ENCODE measurements at regions of chr2 and their contacts with region 1.

Region 1: DNA sequence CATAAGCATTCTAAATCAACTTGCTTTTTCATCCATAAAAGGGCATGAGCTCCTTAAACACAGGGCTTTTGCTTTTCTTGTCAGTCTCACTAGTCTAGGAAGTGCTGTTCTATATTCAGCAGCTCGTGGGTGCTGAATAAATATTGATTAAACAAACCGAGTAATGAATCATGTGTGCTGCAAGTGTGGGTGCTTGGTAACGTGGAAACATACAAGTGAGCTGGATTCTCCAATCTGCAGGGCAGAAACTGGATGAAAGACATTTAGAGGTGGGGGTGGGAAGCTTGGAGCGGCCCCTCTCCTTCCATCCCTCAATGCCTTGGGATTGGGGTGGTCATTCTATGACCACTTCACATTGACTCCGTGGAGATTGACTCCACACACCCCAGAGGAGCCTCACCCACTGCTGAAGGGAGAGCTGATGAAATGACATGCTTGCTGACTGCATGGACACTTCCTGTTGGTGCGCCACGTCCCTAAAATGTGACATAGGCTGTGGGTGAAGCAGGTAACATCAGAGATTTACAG is 114.6 kb downstream of the DOCK10 start:
- DNase-seq: peak; percentile 83 to 92 (median 85)
- H3K4me3 ChIP-seq: peak overlapping the region in 1 of 2 donors; percentile 12
- H3K4me3 Mint-ChIP-seq: peak overlapping the region; percentile 65 to 72 (median 70)
- H3K27ac ChIP-seq: peak overlapping the region; percentile 63
- H3K27ac Mint-ChIP-seq: peak overlapping the region; percentile 92 to 99 (median 96)
- H3K4me1 ChIP-seq: peaks cover 100% of the 10 kb centered on the region
- H3K4me1 Mint-ChIP-seq: peaks cover 89 to 100% (median 94%) of the 10 kb centered on the region in 4 donors
- H3K27me3 ChIP-seq: no peaks in the 10 kb centered on the region
- H3K27me3 Mint-ChIP-seq: no peaks in the 10 kb centered on the region

Region 2: GRCh38 chr2:224885836-224886547 is 41.7 kb before region 1 on chr2:
- CTCF ChIA-PET with region 1: interaction called, 3 read pairs
- POLR2A ChIA-PET with region 1: interaction called, 3 read pairs
- intact Hi-C with region 1: loop called (anchors 5 kb)
- DNase-seq: no peak
- H3K4me3 ChIP-seq: no peak overlapping the region
- H3K4me3 Mint-ChIP-seq: peak overlapping the region in 1 of 8 donors; percentile 7
- H3K27ac ChIP-seq: peak overlapping the region; percentile 9
- H3K27ac Mint-ChIP-seq: peak overlapping the region; percentile 57 to 81 (median 67)
- H3K4me1 ChIP-seq: peaks cover 29% of the 10 kb centered on the region
- H3K4me1 Mint-ChIP-seq: peaks cover 45 to 72% (median 53%) of the 10 kb centered on the region in 4 donors
- H3K27me3 ChIP-seq: no peaks in the 10 kb centered on the region
- H3K27me3 Mint-ChIP-seq: no peaks in the 10 kb centered on the region

Region 3: DNA sequence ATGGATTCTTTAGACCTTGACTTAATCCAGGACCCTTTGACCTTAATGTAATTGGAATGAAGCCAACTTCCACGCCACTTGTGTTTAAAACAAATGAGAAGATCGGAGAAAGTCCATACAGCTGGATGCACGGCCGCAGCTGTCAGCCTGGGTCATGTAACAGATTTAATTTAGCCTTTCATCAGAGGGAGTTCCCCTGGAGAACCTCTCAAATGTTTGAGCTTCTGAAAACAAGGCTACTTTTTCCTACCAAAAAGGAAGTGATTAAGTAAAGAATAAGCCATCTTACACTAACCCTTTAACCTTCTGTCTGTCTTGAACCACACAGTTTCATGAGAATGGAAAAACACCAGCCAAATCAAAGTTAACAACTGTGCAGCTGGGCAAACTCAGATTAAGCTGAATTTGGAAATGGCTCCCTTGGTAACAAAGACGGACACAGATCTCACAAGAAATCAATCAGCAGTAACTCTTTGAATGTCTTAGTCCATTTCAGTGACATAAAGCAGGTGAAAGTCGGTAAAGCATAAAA is 11.0 kb after region 1 on chr2:
- CTCF ChIA-PET with region 1: interaction called, 14 read pairs
- POLR2A ChIA-PET with region 1: interaction called, 279 read pairs
- intact Hi-C with region 1: no loop called
- DNase-seq: peak in 1 of 5 donors; percentile 66
- H3K4me3 ChIP-seq: peak overlapping the region in 1 of 2 donors; percentile 3
- H3K4me3 Mint-ChIP-seq: peak overlapping the region; percentile 13 to 79 (median 66)
- H3K27ac ChIP-seq: peak overlapping the region; percentile 44
- H3K27ac Mint-ChIP-seq: peak overlapping the region; percentile 69 to 94 (median 83)
- H3K4me1 ChIP-seq: peaks cover 94% of the 10 kb centered on the region
- H3K4me1 Mint-ChIP-seq: peaks cover 62 to 90% (median 75%) of the 10 kb centered on the region in 4 donors
- H3K27me3 ChIP-seq: no peaks in the 10 kb centered on the region
- H3K27me3 Mint-ChIP-seq: no peaks in the 10 kb centered on the region

Region 4: DNA sequence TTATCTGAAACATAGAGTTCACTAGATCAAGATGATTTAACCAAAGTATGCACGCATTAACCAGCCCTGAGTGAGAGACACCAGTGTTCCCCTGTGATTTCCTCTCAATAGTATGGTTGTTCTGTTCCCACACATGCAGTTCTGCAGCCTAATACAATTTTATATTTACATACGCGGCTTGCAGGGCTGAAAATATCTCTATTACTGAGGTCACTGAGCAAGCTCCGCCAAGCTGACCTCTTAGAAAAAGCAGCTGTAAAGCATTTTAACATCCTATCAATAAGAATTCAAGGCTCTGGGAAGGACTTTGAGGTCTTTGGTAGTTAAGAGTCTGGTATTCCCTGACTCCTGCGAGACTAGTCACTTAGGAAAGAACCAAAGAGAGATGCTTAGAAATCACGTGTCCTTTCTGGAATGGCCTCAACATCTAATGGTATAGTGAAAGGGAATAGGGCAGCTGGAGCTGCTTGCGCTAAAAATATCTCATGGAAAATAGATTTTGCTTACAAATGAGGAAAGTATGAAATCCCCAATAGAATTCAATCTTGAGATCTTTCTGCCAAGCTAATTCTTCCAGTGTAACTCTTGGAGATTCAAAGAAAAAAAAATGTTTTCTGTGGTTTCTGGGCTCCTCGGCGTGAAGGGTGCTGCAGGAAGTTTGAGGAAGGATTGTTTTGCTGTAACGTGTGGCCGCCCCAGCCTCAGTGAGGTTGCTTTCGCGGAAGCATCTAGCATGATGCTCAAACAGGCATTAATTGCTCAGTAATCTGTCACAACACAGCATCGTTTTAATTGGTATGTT is 55.4 kb after region 1 on chr2:
- CTCF ChIA-PET with region 1: interaction called, 5 read pairs
- POLR2A ChIA-PET with region 1: interaction called, 10 read pairs
- intact Hi-C with region 1: loop called (anchors 1 kb)
- DNase-seq: peak in 4 of 5 donors; percentile 25 to 45 (median 39)
- H3K4me3 ChIP-seq: no peak overlapping the region
- H3K4me3 Mint-ChIP-seq: peak overlapping the region; percentile 29 to 86 (median 80)
- H3K27ac ChIP-seq: peak overlapping the region; percentile 18
- H3K27ac Mint-ChIP-seq: peak overlapping the region; percentile 79 to 95 (median 92)
- H3K4me1 ChIP-seq: peaks cover 69% of the 10 kb centered on the region
- H3K4me1 Mint-ChIP-seq: peaks cover 59 to 88% (median 73%) of the 10 kb centered on the region in 4 donors
- H3K27me3 ChIP-seq: no peaks in the 10 kb centered on the region
- H3K27me3 Mint-ChIP-seq: no peaks in the 10 kb centered on the region

Region 5: DNA sequence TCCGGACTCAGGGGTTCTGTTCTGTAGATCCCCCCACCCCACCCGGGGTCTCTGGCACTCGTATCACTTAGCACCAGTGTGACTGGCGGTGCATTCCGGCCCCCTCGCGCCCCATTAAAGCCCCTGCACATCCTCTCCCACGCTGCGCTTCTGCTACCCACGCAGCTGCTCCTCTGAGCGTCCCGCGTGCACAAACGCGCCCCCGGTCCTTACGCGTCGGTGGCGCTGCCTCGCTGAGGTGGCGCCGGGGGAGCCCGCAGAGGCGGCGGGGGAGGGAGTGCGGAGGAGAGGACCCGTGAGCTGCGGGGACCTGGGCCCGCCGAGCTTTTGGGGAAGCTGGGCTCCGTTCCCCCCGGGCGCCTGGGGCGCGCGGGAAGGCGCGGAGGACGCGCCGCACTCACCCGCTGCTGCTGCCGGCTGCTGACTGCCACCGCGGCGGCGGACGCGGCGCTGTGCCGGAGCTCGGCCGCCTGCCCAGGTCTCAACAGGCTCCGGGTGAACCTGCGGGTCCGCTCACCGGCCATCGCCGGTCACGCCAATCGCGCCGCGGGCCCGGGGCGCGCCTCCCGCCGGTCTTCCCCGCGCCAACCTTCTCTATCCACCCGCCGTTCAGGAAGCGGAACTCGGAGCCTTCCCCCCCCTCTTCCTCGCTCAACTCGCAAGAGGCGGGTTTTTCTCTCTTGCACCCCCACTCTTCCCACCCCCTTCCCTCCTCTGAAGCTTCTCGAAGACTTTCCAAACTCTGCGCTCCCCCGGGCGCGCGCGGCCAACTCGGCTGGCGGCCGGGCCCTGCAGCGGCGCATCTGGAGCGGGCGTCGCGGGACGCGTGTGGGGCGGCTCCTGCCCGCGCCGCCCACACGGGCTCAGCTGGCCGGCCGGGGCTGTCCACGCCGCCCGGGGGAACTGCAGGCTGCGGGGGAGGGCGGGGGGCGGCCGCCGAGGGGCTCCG is 114.4 kb after region 1 on chr2 and contains the start of gene DOCK10:
- CTCF ChIA-PET with region 1: interaction called, 4 read pairs
- POLR2A ChIA-PET with region 1: interaction called, 15 read pairs
- intact Hi-C with region 1: loop called (anchors 5 kb)
- DNase-seq: peak; percentile 60 to 75 (median 63)
- H3K4me3 ChIP-seq: peak within 1 kb of the TSS; percentile 32 to 94
- H3K4me3 Mint-ChIP-seq: peak within 1 kb of the TSS; percentile 94 to 100 (median 98)
- H3K27ac ChIP-seq: peak within 1 kb of the TSS; percentile 91
- H3K27ac Mint-ChIP-seq: peak within 1 kb of the TSS; percentile 94 to 99 (median 97)
- H3K4me1 ChIP-seq: peaks cover 52% of the 10 kb centered on the region
- H3K4me1 Mint-ChIP-seq: peaks cover 44 to 62% (median 53%) of the 10 kb centered on the region in 4 donors
- H3K27me3 ChIP-seq: no peaks in the 10 kb centered on the region
- H3K27me3 Mint-ChIP-seq: no peaks in the 10 kb centered on the region
- total RNA-seq, gene DOCK10: 180 to 186 TPM

Measured in CD4-positive, alpha-beta memory T cell (primary cell).